Esophagus muscularis mucosa (tissue), 4 donors: ENCODE measurements at regions of chr13 and their contacts with region 1.

Region 1: GRCh38 chr13:97432917-97433726 is 847 bp upstream of the RAP2A start:
- DNase-seq: peak; percentile 100
- H3K4me3 ChIP-seq: peak overlapping the region; percentile 78 to 92 (median 83)
- H3K27ac ChIP-seq: peak overlapping the region; percentile 99 to 100 (median 100)
- H3K4me1 ChIP-seq: peaks cover 26 to 49% (median 37%) of the 10 kb centered on the region in 4 donors
- H3K27me3 ChIP-seq: no peaks in the 10 kb centered on the region
- CTCF ChIP-seq: peak in 1 of 3 experiments; percentile 21
- EP300 ChIP-seq: no peak
- POLR2A ChIP-seq: no peak

Region 2: DNA sequence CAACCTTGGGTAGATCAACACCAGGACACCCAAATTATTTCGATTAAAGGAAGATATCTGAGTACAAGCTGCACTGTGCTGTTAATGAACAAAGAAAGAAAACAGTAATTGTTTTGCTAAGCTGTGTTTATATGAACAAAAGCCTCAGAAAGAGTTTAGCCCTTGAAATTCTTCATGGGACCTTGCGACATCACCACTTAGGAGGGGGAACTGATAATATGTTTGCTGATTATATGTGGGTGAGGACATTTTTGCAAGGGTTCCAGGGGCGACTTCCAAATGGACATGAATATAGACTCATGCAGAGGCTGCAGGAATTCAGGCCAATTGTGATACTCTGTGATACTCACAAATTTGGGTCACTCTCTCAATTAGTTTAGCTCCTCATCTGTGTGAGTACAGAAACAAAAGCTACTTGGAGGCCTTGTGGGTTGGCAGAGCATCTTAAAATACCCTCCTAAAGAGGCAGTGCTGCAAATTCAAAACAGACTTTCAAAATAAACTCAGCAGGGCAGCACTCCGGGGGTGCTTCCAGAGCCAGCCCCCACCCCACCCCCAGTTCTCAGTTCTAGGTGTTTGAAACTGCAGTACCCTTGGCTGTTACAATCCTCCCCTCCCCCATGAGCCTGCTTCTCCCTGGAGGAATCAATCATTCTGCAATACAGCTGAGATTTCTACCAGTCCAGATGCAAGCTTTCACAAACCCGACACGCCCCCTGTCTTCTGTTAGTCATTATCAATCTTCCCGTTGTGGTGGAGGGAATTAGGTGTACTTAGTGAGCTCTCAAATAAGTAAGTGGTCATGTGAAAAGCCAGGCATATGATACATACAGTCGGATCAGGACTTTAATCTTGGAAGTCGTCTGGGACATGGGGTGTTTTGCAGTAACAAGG is 308.0 kb before region 1 on chr13:
- intact Hi-C with region 1: loop called (anchors 5 kb)
- DNase-seq: no peak
- H3K4me3 ChIP-seq: no peak overlapping the region
- H3K27ac ChIP-seq: peak overlapping the region; percentile 44 to 73 (median 66)
- H3K4me1 ChIP-seq: peaks cover 26 to 51% (median 37%) of the 10 kb centered on the region in 4 donors
- H3K27me3 ChIP-seq: no peaks in the 10 kb centered on the region
- CTCF ChIP-seq: peak in 2 of 3 experiments; percentile 27 to 45
- EP300 ChIP-seq: no peak
- POLR2A ChIP-seq: no peak

Region 3: DNA sequence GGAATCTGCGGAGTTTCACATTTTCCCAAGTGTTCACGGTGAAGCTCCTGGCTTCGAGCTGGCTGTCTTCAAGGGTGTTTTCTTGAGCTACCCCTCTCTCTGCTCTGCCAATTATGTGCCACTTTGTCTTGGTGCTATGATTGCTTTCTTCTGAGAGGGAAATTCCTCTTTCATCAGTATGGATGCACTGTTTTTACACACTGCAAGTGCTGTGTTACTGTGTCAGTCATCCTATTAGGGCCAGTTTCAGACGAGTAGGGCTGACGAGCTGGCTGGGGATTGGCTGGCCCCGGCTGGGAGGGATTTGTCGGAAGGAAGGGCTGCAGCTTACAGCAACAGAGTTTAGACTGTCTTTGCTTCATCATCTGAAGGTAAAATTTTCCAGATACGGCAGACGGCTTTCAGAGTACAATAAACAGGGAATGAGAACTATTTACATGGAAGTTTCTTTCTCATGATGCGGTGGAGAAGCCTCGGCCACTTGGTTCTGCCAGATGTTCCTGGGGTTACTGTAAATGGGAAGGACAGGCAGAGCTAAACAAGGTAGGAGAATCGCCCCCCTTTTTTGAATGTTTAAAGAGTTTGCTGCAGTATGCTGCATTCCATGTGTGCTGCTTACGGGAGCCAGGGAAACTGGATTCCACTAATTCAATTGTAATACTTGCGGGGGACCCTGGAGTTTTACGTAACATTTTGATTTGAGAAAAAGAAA is 211.0 kb before region 1 on chr13 and contains the start of gene MBNL2:
- intact Hi-C with region 1: loop called (anchors 10 kb)
- DNase-seq: peak; percentile 98
- H3K4me3 ChIP-seq: peak within 1 kb of the TSS; percentile 62 to 74 (median 69)
- H3K27ac ChIP-seq: peak within 1 kb of the TSS; percentile 90 to 94 (median 92)
- H3K4me1 ChIP-seq: peaks cover 18 to 34% (median 30%) of the 10 kb centered on the region in 4 donors
- H3K27me3 ChIP-seq: no peaks in the 10 kb centered on the region
- CTCF ChIP-seq: no peak
- EP300 ChIP-seq: peak; percentile 42
- POLR2A ChIP-seq: peak; percentile 67
- total RNA-seq, gene MBNL2: 92.8 to 132 (median 101) TPM